ENCODE measurements at regions of chr4 and their contacts with region 1.

Region 1: DNA sequence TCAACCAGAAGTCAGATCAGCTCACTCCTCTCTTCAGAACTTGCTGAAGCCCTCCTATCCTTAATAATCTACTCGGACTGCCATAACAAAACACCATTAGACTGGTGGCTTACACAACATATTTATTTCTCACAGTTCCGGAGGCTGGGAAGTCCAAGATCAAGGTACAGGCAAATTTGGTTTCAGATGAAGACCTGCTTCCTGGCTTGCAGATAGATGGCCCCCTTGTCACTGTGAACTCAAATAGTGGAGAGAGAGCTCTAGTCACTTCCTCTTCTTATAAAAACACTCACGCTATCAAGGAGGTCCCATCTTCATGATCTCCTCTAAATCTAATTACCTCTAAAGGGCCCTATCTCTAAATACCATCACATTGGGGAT is 125.1 kb downstream of the CAMK2D start:
- DNase-seq: peak in 1 of 2 donors; percentile 65
- ATAC-seq: peak; percentile 79 to 89 (median 87)
- H3K4me3 ChIP-seq: no peak overlapping the region
- H3K4me3 Mint-ChIP-seq: peak overlapping the region; percentile 69
- H3K27ac ChIP-seq: peak overlapping the region; percentile 50
- H3K27ac Mint-ChIP-seq: peak overlapping the region; percentile 60 to 84
- H3K4me1 ChIP-seq: peaks cover 24% of the 10 kb centered on the region
- H3K4me1 Mint-ChIP-seq: peaks cover 43 to 45% of the 10 kb centered on the region in 2 donors
- H3K27me3 ChIP-seq: no peaks in the 10 kb centered on the region
- H3K27me3 Mint-ChIP-seq: no peaks in the 10 kb centered on the region
- CTCF ChIP-seq: peak; percentile 45

Region 2: DNA sequence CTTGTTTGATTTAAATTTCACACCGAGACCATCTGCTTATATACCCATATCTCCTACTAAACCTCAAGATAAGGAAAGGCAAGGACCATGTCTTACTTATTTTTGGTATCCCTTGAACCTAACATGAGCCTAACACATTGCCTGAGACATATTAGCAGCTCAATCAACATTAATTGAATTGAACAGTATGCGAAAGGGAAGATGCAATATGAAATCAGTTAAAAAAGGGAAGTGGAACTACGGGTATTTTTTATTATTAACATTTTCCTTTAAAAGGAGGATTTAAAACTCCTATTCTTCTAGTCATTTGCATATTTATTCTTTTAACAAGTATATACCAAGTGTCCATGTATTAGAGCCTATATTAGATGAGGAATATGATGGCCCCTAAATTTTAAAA is 71.9 kb before region 1 on chr4:
- intact Hi-C with region 1: loop called (anchors 10 kb)
- DNase-seq: no peak
- ATAC-seq: peak in 1 of 3 donors; percentile 16
- H3K4me3 ChIP-seq: no peak overlapping the region
- H3K4me3 Mint-ChIP-seq: peak overlapping the region; percentile 85
- H3K27ac ChIP-seq: peak overlapping the region; percentile 24
- H3K27ac Mint-ChIP-seq: peak overlapping the region; percentile 74 to 82
- H3K4me1 ChIP-seq: peaks cover 10% of the 10 kb centered on the region
- H3K4me1 Mint-ChIP-seq: peaks cover 34 to 37% of the 10 kb centered on the region in 2 donors
- H3K27me3 ChIP-seq: no peaks in the 10 kb centered on the region
- H3K27me3 Mint-ChIP-seq: peaks cover 10 to 15% of the 10 kb centered on the region in 2 donors
- CTCF ChIP-seq: no peak

Region 3: GRCh38 chr4:113893546-113893945 is 257.1 kb after region 1 on chr4:
- intact Hi-C with region 1: loop called (anchors 2 kb)
- DNase-seq: peak in 1 of 2 donors; percentile 15
- ATAC-seq: no peak
- H3K4me3 ChIP-seq: no peak overlapping the region
- H3K4me3 Mint-ChIP-seq: no peak overlapping the region
- H3K27ac ChIP-seq: no peak overlapping the region
- H3K27ac Mint-ChIP-seq: no peak overlapping the region
- H3K4me1 ChIP-seq: no peaks in the 10 kb centered on the region
- H3K4me1 Mint-ChIP-seq: no peaks in the 10 kb centered on the region
- H3K27me3 ChIP-seq: no peaks in the 10 kb centered on the region
- H3K27me3 Mint-ChIP-seq: peaks cover 0 to 4% of the 10 kb centered on the region in 2 donors
- CTCF ChIP-seq: no peak